Activated CD4-positive, alpha-beta T cell treated with anti-CD3 and anti-CD28 coated beads for 36 hours (primary cell): ENCODE measurements at regions of chr7 and their contacts with region 1.

Region 1: GRCh38 chr7:114085592-114086501 is 167.0 kb upstream of the PPP1R3A start:
- DNase-seq: peak; percentile 53
- ATAC-seq: peak; percentile 45
- H3K4me3 Mint-ChIP-seq: peak overlapping the region; percentile 67
- H3K27ac Mint-ChIP-seq: peak overlapping the region; percentile 25
- H3K4me1 Mint-ChIP-seq: peaks cover 35% of the 10 kb centered on the region
- H3K27me3 Mint-ChIP-seq: peaks cover 67% of the 10 kb centered on the region

Region 2: DNA sequence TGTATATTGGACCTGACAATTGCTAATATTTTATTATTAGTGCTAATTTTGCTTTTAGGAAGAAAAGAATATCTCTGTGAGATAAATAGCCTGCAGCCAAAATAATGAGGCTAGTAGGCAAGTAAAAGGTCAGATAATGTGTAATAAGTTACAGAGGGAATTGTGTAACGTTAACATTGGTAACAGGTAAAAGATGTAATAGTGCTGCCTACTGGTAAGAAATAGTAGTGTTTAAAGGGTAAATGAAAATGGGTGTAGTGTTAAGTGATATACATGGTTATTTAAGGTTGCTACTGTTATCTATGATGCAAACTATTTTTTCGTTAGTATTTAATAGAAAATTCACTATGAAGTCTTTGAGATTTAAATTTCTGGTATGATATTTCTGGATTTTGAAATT is 319.6 kb after region 1 on chr7:
- CTCF ChIA-PET with region 1: no interaction called
- POLR2A ChIA-PET with region 1: no interaction called
- intact Hi-C with region 1: loop called in 1 of 2 experiments (anchors 5 kb)
- DNase-seq: no peak
- ATAC-seq: no peak
- H3K4me3 Mint-ChIP-seq: no peak overlapping the region
- H3K27ac Mint-ChIP-seq: no peak overlapping the region
- H3K4me1 Mint-ChIP-seq: no peaks in the 10 kb centered on the region
- H3K27me3 Mint-ChIP-seq: no peaks in the 10 kb centered on the region

Region 3: GRCh38 chr7:114663502-114663901 is 577.7 kb after region 1 on chr7:
- CTCF ChIA-PET with region 1: no interaction called
- POLR2A ChIA-PET with region 1: interaction called, 6 read pairs
- intact Hi-C with region 1: loop called in 1 of 2 experiments (anchors 10 kb)
- DNase-seq: peak; percentile 8
- ATAC-seq: no peak
- H3K4me3 Mint-ChIP-seq: no peak overlapping the region
- H3K27ac Mint-ChIP-seq: no peak overlapping the region
- H3K4me1 Mint-ChIP-seq: no peaks in the 10 kb centered on the region
- H3K27me3 Mint-ChIP-seq: no peaks in the 10 kb centered on the region

Region 4: DNA sequence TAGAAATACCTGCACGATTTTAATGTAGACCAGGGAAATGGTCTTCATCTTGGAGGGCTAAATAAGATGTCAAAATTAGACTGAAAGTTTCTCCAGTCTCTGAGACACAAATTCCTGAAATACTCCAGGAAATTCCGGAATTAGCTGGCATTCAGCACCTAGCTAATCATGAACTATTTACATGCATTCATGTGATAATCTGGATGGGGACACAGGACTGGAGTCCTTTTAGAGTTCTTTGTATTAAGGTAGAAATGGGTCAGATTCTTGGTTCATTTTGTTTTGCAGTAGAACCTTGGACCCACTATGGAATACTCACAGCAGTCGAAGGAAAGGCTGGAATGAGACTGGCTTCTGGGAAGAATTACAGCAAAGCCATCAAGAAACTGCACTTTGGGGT is 770.8 kb after region 1 on chr7:
- CTCF ChIA-PET with region 1: no interaction called
- POLR2A ChIA-PET with region 1: no interaction called
- intact Hi-C with region 1: loop called in 1 of 2 experiments (anchors 5 kb)
- DNase-seq: no peak
- ATAC-seq: no peak
- H3K4me3 Mint-ChIP-seq: no peak overlapping the region
- H3K27ac Mint-ChIP-seq: no peak overlapping the region
- H3K4me1 Mint-ChIP-seq: peaks cover 5% of the 10 kb centered on the region
- H3K27me3 Mint-ChIP-seq: peaks cover 4% of the 10 kb centered on the region

Region 5: DNA sequence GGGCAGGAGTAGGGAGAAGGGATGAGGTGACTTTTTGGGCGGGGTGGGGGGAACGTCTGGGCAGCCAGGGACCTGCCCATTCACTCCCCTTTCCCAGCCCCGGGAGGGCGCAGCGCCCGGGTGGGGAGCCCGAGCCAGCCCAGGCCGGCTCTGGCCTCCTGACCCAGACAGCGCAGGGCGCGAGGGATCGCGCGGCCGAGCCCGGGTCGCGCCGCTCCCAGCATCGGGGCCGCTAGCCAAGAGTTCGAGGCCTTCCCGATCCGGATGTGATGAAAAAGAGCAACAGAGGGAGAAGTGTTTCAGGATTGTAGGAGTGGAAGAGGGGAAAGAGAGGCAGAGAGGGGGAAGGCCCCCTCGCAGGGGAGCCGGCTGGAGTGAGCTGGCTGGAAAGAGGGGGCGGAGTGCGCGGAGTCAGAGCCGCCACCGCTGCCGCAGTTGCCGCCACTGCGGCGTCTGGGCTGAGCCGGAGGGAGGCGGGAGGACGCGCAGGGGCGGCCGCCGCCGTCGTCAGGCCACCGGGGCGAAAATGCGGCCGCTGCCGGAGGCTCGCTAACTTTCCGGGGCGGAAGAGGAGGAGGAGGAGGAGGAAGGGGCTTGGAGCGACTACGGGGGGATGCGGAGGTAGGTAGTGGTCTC is 836.3 kb after region 1 on chr7 and contains the start of gene MDFIC:
- CTCF ChIA-PET with region 1: no interaction called
- POLR2A ChIA-PET with region 1: no interaction called
- intact Hi-C with region 1: loop called in 1 of 2 experiments (anchors 10 kb)
- DNase-seq: peak; percentile 83
- ATAC-seq: peak; percentile 62
- H3K4me3 Mint-ChIP-seq: peak within 1 kb of the TSS; percentile 89
- H3K27ac Mint-ChIP-seq: peak within 1 kb of the TSS; percentile 96
- H3K4me1 Mint-ChIP-seq: peaks cover 63% of the 10 kb centered on the region
- H3K27me3 Mint-ChIP-seq: no peaks in the 10 kb centered on the region
- total RNA-seq, gene MDFIC: 68.4 to 113 TPM

Region 6: GRCh38 chr7:115851291-115851690 is 1765.4 kb after region 1 on chr7:
- CTCF ChIA-PET with region 1: no interaction called
- POLR2A ChIA-PET with region 1: no interaction called
- intact Hi-C with region 1: loop called in 1 of 2 experiments (anchors 1 kb)
- DNase-seq: no peak
- ATAC-seq: no peak
- H3K4me3 Mint-ChIP-seq: no peak overlapping the region
- H3K27ac Mint-ChIP-seq: no peak overlapping the region
- H3K4me1 Mint-ChIP-seq: no peaks in the 10 kb centered on the region
- H3K27me3 Mint-ChIP-seq: peaks cover 2% of the 10 kb centered on the region

Region 7: DNA sequence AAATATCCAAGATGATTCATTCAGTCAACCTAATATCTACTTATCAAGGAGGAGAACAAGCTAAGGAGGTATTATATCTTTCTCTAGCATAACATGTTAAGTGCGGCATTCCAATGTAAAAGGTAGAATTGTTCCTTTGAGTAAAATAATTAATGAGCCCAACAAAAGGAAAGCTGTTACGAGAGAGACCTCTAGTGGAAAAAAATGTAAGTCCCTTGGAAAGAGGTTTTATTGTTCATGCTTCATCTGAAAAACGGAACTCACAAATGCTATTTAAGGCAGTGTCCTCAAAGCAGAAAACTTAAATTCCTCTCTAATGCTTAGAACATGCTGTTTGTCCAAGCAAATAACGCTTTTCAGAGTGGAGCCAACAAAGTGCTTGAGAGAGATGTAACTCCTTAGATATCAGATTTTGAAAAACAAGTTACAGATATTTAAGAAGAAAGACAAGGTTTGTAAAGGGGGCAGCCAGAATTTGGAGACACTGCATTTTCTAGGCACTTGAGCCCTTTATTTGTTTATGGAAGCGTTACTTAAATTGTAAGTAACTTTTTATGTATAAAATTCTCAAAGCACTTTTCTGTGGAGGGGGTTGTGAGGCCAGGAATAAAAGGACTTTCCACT is 1824.8 kb after region 1 on chr7:
- CTCF ChIA-PET with region 1: interaction called, 3 read pairs
- POLR2A ChIA-PET with region 1: no interaction called
- intact Hi-C with region 1: loop called in 1 of 2 experiments (anchors 5 kb)
- DNase-seq: no peak
- ATAC-seq: no peak
- H3K4me3 Mint-ChIP-seq: no peak overlapping the region
- H3K27ac Mint-ChIP-seq: no peak overlapping the region
- H3K4me1 Mint-ChIP-seq: no peaks in the 10 kb centered on the region
- H3K27me3 Mint-ChIP-seq: peaks cover 5% of the 10 kb centered on the region